Naive thymus-derived CD4-positive, alpha-beta T cell (primary cell): ENCODE measurements at regions of chr5 and their contacts with region 1.

Region 1: DNA sequence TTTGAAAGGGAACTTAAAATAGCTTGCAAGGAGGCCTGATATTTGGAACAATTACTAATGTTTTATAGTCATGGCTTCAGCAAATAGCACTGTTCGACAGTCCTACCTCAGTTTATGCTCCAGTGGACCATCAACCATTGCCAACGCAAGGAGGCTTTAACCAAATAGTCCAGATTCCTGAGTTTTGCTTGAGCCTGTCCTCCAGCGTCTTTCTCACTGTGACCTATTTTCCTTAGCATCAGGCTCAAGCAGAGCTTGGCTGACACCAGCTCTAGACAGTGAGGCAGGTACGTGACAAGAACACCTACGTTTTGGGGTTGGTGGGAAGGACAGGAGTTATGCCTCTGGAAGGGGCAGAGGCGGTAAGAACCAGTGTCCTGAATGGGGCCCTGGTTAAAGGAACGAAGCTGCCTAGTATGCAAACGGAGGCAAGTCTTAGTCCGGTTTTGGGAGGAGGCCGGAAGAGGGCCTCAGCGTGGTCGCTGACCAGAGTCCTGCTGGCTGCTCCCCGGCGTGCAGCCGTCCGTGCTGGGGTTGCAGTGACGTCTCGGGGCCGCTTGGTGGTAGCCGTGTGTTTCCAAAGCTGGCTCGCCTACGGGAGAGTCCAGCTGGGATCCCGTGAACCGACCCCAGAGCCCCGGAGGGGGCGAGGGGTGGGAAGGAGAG is 998 bp upstream of the FGF18 start:
- DNase-seq: peak in 7 of 9 donors; percentile 17 to 68 (median 20)
- ATAC-seq: peak; percentile 66
- H3K4me3 ChIP-seq: peak overlapping the region; percentile 45
- H3K4me3 Mint-ChIP-seq: peak overlapping the region; percentile 58 to 86 (median 73)
- H3K27ac ChIP-seq: no peak overlapping the region
- H3K27ac Mint-ChIP-seq: no peak overlapping the region
- H3K4me1 ChIP-seq: peaks cover 5 to 15% of the 10 kb centered on the region in 2 donors
- H3K4me1 Mint-ChIP-seq: peaks cover 6 to 20% (median 11%) of the 10 kb centered on the region in 7 donors
- H3K27me3 ChIP-seq: peaks cover 3 to 4% of the 10 kb centered on the region in 2 donors
- H3K27me3 Mint-ChIP-seq: peaks cover 11 to 33% (median 19%) of the 10 kb centered on the region in 5 donors

Region 2: GRCh38 chr5:171606414-171607024 is 188.1 kb after region 1 on chr5:
- CTCF ChIA-PET with region 1: no interaction called
- POLR2A ChIA-PET with region 1: no interaction called
- intact Hi-C with region 1: loop called in 1 of 2 experiments (anchors 2 kb)
- DNase-seq: no peak
- ATAC-seq: no peak
- H3K4me3 ChIP-seq: no peak overlapping the region
- H3K4me3 Mint-ChIP-seq: no peak overlapping the region
- H3K27ac ChIP-seq: no peak overlapping the region
- H3K27ac Mint-ChIP-seq: no peak overlapping the region
- H3K4me1 ChIP-seq: no peaks in the 10 kb centered on the region
- H3K4me1 Mint-ChIP-seq: no peaks in the 10 kb centered on the region
- H3K27me3 ChIP-seq: no peaks in the 10 kb centered on the region
- H3K27me3 Mint-ChIP-seq: peaks cover 10 to 48% (median 34%) of the 10 kb centered on the region in 5 donors

Region 3: GRCh38 chr5:171845857-171846256 is 427.4 kb after region 1 on chr5:
- CTCF ChIA-PET with region 1: no interaction called
- POLR2A ChIA-PET with region 1: no interaction called
- intact Hi-C with region 1: no loop called
- DNase-seq: no peak
- ATAC-seq: no peak
- H3K4me3 ChIP-seq: no peak overlapping the region
- H3K4me3 Mint-ChIP-seq: no peak overlapping the region
- H3K27ac ChIP-seq: no peak overlapping the region
- H3K27ac Mint-ChIP-seq: no peak overlapping the region
- H3K4me1 ChIP-seq: no peaks in the 10 kb centered on the region
- H3K4me1 Mint-ChIP-seq: peaks cover 0 to 10% (median 3%) of the 10 kb centered on the region in 7 donors
- H3K27me3 ChIP-seq: no peaks in the 10 kb centered on the region
- H3K27me3 Mint-ChIP-seq: no peaks in the 10 kb centered on the region

Region 4: DNA sequence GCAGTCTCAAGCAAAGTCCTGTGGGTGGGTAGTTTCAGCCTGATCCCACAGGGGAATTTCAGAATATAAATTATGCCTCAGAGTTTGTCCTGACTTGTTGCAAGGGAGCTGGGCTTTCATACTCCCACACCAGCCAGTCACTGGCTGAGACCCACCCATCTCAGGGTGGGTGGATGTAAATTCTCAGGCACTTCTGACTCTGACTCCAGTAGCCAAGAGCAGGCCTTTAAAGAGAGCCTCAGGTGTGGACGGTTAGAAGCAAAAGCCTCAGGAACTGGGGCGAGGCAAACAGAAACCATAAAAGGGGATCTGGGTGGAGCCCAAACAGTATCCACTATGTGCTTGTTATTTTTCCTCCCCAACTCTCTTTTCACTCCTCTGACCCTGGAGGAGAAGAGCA is 616.6 kb after region 1 on chr5:
- CTCF ChIA-PET with region 1: no interaction called
- POLR2A ChIA-PET with region 1: no interaction called
- intact Hi-C with region 1: loop called in 1 of 2 experiments (anchors 1 kb)
- DNase-seq: no peak
- ATAC-seq: peak; percentile 27
- H3K4me3 ChIP-seq: no peak overlapping the region
- H3K4me3 Mint-ChIP-seq: peak overlapping the region in 1 of 10 donors; percentile 20
- H3K27ac ChIP-seq: no peak overlapping the region
- H3K27ac Mint-ChIP-seq: no peak overlapping the region
- H3K4me1 ChIP-seq: no peaks in the 10 kb centered on the region
- H3K4me1 Mint-ChIP-seq: peaks cover 0 to 16% (median 9%) of the 10 kb centered on the region in 7 donors
- H3K27me3 ChIP-seq: no peaks in the 10 kb centered on the region
- H3K27me3 Mint-ChIP-seq: no peaks in the 10 kb centered on the region

Region 5: DNA sequence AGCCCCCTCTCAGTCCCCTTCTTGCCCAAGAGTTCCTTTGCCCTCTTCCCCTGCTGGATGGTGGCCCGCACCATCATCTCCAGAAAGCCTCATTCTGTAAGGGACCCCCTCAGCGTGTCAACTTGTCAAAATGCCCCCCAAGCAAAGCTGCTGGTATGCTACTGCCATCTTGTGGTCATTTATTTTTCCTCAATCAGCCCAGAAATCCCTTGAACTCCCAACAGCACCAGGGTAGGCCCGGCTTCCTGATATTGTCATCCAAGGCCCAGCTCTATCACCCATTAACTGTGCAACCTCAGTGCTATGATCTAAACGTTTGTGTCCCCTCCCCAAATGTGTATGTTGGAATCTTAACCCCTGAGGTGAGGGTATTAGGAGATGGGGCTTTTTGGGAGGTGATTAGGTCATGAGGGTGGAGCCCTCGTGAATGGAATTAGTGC is 641.2 kb after region 1 on chr5:
- CTCF ChIA-PET with region 1: no interaction called
- POLR2A ChIA-PET with region 1: no interaction called
- intact Hi-C with region 1: loop called in 1 of 2 experiments (anchors 10 kb)
- DNase-seq: peak in 1 of 9 donors; percentile 36
- ATAC-seq: no peak
- H3K4me3 ChIP-seq: no peak overlapping the region
- H3K4me3 Mint-ChIP-seq: peak overlapping the region in 4 of 10 donors; percentile 4 to 42 (median 12)
- H3K27ac ChIP-seq: no peak overlapping the region
- H3K27ac Mint-ChIP-seq: peak overlapping the region; percentile 3 to 91 (median 54)
- H3K4me1 ChIP-seq: peaks cover 0 to 7% of the 10 kb centered on the region in 2 donors
- H3K4me1 Mint-ChIP-seq: peaks cover 22 to 68% (median 33%) of the 10 kb centered on the region in 7 donors
- H3K27me3 ChIP-seq: no peaks in the 10 kb centered on the region
- H3K27me3 Mint-ChIP-seq: no peaks in the 10 kb centered on the region

Region 6: GRCh38 chr5:172293054-172293744 is 874.8 kb after region 1 on chr5:
- CTCF ChIA-PET with region 1: interaction called, 3 read pairs
- POLR2A ChIA-PET with region 1: no interaction called
- intact Hi-C with region 1: loop called (anchors 2 to 10 kb)
- DNase-seq: peak; percentile 20 to 77 (median 67)
- ATAC-seq: peak; percentile 100
- H3K4me3 ChIP-seq: no peak overlapping the region
- H3K4me3 Mint-ChIP-seq: no peak overlapping the region
- H3K27ac ChIP-seq: no peak overlapping the region
- H3K27ac Mint-ChIP-seq: peak overlapping the region in 1 of 9 donors; percentile 43
- H3K4me1 ChIP-seq: no peaks in the 10 kb centered on the region
- H3K4me1 Mint-ChIP-seq: peaks cover 0 to 4% (median 2%) of the 10 kb centered on the region in 7 donors
- H3K27me3 ChIP-seq: no peaks in the 10 kb centered on the region
- H3K27me3 Mint-ChIP-seq: peaks cover 0 to 12% (median 0%) of the 10 kb centered on the region in 5 donors